ENCODE measurements at regions of chr11 and their contacts with region 1.

Region 1: DNA sequence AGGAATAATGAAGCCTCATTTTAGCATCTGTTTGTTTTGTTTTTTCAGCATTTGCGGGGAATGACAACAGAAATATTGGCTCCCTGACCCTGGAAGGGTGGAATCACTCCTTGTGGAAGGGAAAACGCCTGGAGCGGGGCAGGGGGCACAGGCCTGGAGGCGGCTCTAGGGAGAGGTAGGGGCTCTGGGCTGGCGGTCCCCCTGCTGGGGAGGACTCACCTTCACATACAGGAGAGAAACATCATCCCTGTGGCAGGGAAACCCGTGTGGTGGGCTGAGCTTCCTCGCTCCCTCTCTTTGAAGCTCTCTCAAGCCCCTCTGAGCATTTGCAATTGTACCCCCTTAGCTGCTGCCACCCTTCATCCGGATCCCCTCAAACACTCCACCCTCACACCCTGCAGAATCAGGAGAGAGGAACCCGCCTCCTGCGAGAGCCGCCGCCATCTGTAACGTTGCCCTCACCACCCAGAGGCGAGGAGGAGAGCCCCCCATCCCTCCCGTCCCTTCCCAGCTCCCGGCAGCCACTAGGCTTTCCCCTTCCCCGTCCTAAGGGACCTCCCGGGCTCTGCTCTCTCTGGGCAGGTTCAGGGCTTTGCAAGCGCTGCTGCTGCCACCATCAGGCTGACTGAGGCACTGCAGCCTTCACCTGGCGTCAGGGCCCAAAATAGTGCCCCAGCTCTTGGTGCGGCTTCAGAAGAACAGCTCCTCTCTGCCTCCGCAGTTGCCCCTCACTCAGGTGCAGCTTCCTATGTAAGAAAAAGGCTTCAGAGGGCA is 10.4 kb downstream of the KIRREL3 start:
- DNase-seq: peak; percentile 73
- ATAC-seq: peak; percentile 86 to 90
- H3K4me3 ChIP-seq: no peak overlapping the region
- H3K27ac ChIP-seq: no peak overlapping the region
- H3K4me1 ChIP-seq: peaks cover 4% of the 10 kb centered on the region
- H3K27me3 ChIP-seq: no peaks in the 10 kb centered on the region
- CTCF ChIP-seq: peak; percentile 93

Region 2: GRCh38 chr11:126440792-126441514 is 549.2 kb before region 1 on chr11:
- intact Hi-C with region 1: loop called (anchors 10 kb)
- DNase-seq: peak; percentile 81
- ATAC-seq: peak; percentile 87
- H3K4me3 ChIP-seq: no peak overlapping the region
- H3K27ac ChIP-seq: no peak overlapping the region
- H3K4me1 ChIP-seq: peaks cover 7% of the 10 kb centered on the region
- H3K27me3 ChIP-seq: no peaks in the 10 kb centered on the region
- CTCF ChIP-seq: peak; percentile 99

Region 3: DNA sequence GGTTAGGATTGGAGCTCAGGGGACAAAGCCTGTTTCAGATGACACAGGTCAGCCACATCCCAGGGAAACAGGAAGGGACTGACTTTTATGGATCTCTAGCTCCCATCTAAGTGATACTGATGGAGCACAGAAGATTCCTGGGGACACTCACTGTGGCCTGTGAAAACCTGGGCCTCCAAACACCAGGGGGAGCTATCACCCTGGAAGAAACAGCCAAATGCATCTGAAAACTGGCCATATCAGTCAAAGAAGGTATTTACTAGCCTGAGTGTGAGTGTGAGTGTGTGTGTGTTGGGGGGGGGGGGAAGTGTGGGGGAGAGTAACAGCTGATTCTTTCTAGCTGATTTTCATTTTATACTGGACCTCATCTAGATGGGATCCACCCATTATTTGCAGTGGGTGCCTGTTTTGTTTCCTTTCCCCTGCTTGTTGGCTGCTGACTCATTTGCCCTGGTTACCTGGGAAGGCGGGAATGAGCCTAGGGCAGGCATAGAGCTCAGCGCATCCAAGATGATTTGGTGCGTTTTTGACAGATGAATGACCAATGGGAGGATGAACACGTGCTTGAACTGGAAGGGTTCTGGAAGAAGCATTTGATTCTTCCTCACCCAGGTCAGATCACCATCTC is 273.6 kb before region 1 on chr11:
- intact Hi-C with region 1: loop called (anchors 5 kb)
- DNase-seq: no peak
- ATAC-seq: peak; percentile 53 to 59
- H3K4me3 ChIP-seq: no peak overlapping the region
- H3K27ac ChIP-seq: no peak overlapping the region
- H3K4me1 ChIP-seq: no peaks in the 10 kb centered on the region
- H3K27me3 ChIP-seq: peaks cover 6% of the 10 kb centered on the region
- CTCF ChIP-seq: peak; percentile 60

Measured in lower lobe of right lung (tissue), 2 donors.